PC-3 (cell line): ENCODE measurements at regions of chr10 and their contacts with region 1.

Region 1: DNA sequence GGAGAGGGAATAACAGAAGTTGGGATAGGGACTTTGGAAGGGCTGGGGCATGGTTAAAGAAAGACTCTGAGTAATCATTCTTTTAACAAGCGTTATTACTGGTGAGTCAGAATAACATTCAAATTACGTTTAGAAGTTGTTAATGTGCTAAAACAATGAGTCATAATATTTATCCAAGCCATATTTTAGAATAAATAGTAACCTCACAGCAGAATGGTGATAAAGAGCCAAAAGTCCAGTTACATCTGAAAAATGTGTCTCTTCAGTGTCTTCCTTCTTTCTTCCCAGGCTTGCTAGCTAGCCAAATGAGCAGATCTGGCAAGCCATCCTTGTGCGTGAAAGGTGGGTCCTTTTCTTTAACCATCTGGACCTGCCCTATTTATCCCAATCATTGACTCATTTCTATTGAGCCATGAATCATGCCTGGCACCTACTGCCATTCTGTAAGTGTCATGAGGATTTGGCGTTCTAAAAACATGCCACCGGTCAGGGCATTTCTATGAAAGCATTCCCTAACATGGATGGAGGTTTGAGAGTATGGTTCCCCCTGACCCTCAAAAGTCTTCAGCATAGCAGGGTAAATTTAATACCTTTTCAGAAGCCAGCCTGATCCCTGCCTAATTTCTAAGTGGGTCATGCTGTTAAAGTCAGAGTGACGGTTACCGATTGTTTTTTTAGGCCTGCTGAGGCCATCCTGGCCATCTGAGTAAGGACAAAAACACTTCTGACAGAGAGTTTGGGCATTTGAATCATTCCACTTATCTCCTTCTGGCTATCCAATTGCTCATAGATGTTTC is 26.8 kb downstream of the MYPN start:
- DNase-seq: peak; percentile 99
- ATAC-seq: peak; percentile 85
- H3K4me3 ChIP-seq: peak overlapping the region; percentile 39
- H3K27ac ChIP-seq: peak overlapping the region; percentile 88
- H3K4me1 ChIP-seq: peaks cover 63% of the 10 kb centered on the region
- H3K27me3 ChIP-seq: no peaks in the 10 kb centered on the region
- CTCF ChIP-seq: no peak

Region 2: GRCh38 chr10:67098461-67098860 is 1037.7 kb before region 1 on chr10:
- CTCF ChIA-PET with region 1: no interaction called
- POLR2A ChIA-PET with region 1: no interaction called
- intact Hi-C with region 1: no loop called
- DNase-seq: no peak
- ATAC-seq: no peak
- H3K4me3 ChIP-seq: no peak overlapping the region
- H3K27ac ChIP-seq: no peak overlapping the region
- H3K4me1 ChIP-seq: no peaks in the 10 kb centered on the region
- H3K27me3 ChIP-seq: peaks cover 66% of the 10 kb centered on the region
- CTCF ChIP-seq: no peak

Region 3: GRCh38 chr10:67140641-67141040 is 995.5 kb before region 1 on chr10:
- CTCF ChIA-PET with region 1: no interaction called
- POLR2A ChIA-PET with region 1: no interaction called
- intact Hi-C with region 1: no loop called
- DNase-seq: no peak
- ATAC-seq: peak; percentile 31; the same call in 1 of the 2 replicates
- H3K4me3 ChIP-seq: no peak overlapping the region
- H3K27ac ChIP-seq: no peak overlapping the region
- H3K4me1 ChIP-seq: no peaks in the 10 kb centered on the region
- H3K27me3 ChIP-seq: peaks cover 30% of the 10 kb centered on the region
- CTCF ChIP-seq: no peak

Region 4: GRCh38 chr10:68088744-68089143 is 47.4 kb before region 1 on chr10:
- CTCF ChIA-PET with region 1: interaction called, 3 read pairs
- POLR2A ChIA-PET with region 1: interaction called, 5 read pairs
- intact Hi-C with region 1: loop called (anchors 2 kb)
- DNase-seq: peak; percentile 49
- ATAC-seq: no peak
- H3K4me3 ChIP-seq: peak overlapping the region; percentile 66
- H3K27ac ChIP-seq: peak overlapping the region; percentile 91
- H3K4me1 ChIP-seq: peaks cover 92% of the 10 kb centered on the region
- H3K27me3 ChIP-seq: no peaks in the 10 kb centered on the region
- CTCF ChIP-seq: no peak

Region 5: GRCh38 chr10:68096913-68097503 is 39.1 kb before region 1 on chr10:
- CTCF ChIA-PET with region 1: no interaction called
- POLR2A ChIA-PET with region 1: interaction called, 3 read pairs
- intact Hi-C with region 1: loop called (anchors 1 kb)
- DNase-seq: peak; percentile 99
- ATAC-seq: peak; percentile 75
- H3K4me3 ChIP-seq: peak overlapping the region; percentile 10; the same call in 1 of the 2 replicates
- H3K27ac ChIP-seq: peak overlapping the region; percentile 94
- H3K4me1 ChIP-seq: peaks cover 95% of the 10 kb centered on the region
- H3K27me3 ChIP-seq: no peaks in the 10 kb centered on the region
- CTCF ChIP-seq: no peak

Region 6: DNA sequence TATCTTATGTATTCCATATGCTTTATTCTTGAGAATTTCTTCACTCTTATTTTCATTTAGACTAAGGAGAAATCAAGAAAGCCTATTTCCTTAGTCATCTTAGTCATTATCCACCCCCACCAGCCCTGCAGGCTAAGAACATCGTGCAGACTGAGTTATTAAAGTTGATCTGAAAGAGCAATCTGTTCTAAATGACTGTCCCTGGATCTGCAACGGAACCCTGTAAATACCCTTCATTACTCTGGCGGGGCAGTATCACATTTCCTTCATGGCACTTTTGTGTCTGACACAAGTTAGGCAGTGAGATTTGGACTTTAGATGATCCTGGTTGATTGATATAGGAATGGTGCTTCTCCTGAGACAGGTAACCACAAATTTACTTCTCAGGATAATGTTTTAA is 30.3 kb before region 1 on chr10:
- CTCF ChIA-PET with region 1: no interaction called
- POLR2A ChIA-PET with region 1: no interaction called
- intact Hi-C with region 1: loop called (anchors 1 kb)
- DNase-seq: peak; percentile 93
- ATAC-seq: peak; percentile 46
- H3K4me3 ChIP-seq: peak overlapping the region; percentile 42
- H3K27ac ChIP-seq: peak overlapping the region; percentile 83
- H3K4me1 ChIP-seq: peaks cover 69% of the 10 kb centered on the region
- H3K27me3 ChIP-seq: no peaks in the 10 kb centered on the region
- CTCF ChIP-seq: no peak